ENCODE measurements at regions of chr11 and their contacts with region 1.

Region 1: GRCh38 chr11:2975594-2975993 is 16.5 kb downstream of the NAP1L4 start:
- DNase-seq: peak in 38 of 42 donors; percentile 29 to 85 (median 60)

Region 2: GRCh38 chr11:3021125-3021524 is 45.5 kb after region 1 on chr11:
- intact Hi-C with region 1: loop called (anchors 5 kb)
- DNase-seq: peak in 38 of 42 donors; percentile 24 to 86 (median 61)